Right ventricle myocardium inferior (tissue), 1 donor: ENCODE measurements at regions of chr1 and their contacts with region 1.

Region 1: GRCh38 chr1:81756872-81757271 is 43.9 kb upstream of the ADGRL2 start:
- DNase-seq: no peak
- ATAC-seq: no peak

Region 2: DNA sequence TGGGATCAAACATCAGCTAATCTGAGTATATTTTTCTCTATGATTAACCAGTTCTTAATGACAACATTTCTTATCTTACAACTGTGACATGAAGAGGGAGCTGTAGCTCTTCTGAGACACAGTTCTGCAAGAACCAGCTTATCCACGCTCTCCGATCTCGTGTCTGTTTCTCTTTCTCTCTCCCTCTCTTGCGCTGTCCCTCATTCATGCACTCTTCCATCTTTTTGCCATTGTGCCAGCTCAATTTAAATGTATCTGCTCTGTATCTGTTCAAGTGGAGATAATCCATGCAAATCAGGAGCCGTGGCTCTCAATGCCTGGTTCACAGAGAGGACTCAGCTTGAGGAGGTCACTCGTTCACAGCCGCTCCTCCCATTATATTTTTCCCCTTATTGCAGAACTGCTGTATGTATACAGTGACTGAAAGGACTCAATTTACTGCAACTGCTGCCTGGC is 450.8 kb before region 1 on chr1:
- intact Hi-C with region 1: loop called (anchors 10 kb)
- DNase-seq: no peak
- ATAC-seq: peak; percentile 84

Region 3: DNA sequence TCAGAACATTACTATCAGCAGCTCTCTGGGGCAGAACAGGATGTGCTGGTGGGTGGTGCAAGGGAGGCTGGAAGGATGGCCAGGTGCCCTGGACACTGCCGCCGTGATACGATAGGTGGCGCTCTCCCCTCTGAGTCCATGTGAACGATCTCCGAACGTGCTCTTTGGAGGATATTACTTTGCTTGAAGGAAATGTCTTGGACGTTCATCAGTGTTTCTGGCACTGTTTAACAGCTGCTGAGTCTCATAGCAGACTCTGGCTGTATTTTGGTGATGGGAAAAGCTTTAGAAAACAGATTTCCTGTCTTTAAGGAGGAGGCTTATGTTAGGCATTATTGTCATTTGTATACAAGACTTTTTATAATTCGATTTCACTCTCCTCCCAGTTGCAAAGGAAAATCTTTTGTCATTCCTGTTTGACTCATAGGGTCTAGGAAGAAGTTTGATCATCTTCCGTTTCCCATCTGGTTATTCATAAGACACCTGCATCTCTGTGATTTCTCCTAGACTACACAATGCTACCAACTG is 342.3 kb before region 1 on chr1:
- intact Hi-C with region 1: loop called (anchors 10 kb)
- DNase-seq: peak; percentile 88
- ATAC-seq: peak; percentile 89

Region 4: DNA sequence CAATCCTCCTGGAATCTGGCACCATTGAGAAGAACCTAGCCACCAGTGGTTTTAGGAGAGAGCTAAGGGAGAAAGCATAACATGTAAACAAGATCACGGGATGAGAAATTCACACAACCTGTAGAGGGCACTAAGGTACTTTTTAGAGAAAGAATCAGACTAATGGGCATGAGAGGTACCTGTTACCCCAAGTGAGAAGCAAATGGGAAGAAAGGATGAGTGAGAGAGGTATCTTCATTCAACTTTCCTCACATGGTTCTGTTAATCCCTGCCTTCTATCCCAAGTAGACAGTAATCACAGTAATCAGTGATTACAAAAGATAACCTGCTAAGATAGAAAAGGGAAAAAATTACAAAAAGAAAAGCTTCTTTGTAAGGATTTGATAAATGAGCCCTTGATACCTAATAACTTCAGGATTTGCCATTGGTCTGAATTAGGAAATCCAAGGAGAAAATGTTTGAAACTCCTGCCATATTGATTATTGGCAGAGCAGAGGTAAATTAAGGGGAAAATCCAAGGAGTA is 207.2 kb before region 1 on chr1:
- intact Hi-C with region 1: loop called (anchors 5 kb)
- DNase-seq: no peak
- ATAC-seq: peak; percentile 60